ENCODE measurements at regions of chr13 and their contacts with region 1.

Region 1: DNA sequence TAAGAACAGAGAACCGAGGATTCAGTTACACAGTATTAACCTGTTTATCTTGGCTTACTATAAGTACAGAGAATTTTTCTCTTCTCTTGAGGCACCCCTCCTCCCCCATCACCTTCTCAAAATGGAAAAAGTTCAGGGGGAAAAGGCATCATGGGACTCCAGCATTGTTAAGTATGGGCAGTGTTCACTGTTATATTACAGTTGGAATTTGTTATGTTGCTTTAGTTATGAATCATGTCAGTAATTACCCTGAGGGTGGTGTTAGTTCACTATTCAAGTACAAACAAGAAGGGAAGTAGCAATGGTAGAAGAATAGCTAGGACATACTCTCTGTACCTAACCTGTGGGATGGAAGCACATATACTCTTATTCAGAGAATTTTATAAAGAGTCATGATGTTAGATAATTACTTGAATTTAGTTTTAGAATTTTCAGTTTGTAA is 12.0 kb downstream of the LPAR6 start:
- DNase-seq: no peak
- H3K4me3 Mint-ChIP-seq: peak overlapping the region; percentile 24
- H3K27ac Mint-ChIP-seq: peak overlapping the region; percentile 37
- H3K4me1 Mint-ChIP-seq: peaks cover 61% of the 10 kb centered on the region
- H3K27me3 Mint-ChIP-seq: no peaks in the 10 kb centered on the region

Region 2: GRCh38 chr13:48222358-48223301 is 178.2 kb before region 1 on chr13:
- intact Hi-C with region 1: loop called (anchors 5 kb)
- DNase-seq: no peak
- H3K4me3 Mint-ChIP-seq: no peak overlapping the region
- H3K27ac Mint-ChIP-seq: no peak overlapping the region
- H3K4me1 Mint-ChIP-seq: peaks cover 37% of the 10 kb centered on the region
- H3K27me3 Mint-ChIP-seq: peaks cover 32% of the 10 kb centered on the region

Region 3: DNA sequence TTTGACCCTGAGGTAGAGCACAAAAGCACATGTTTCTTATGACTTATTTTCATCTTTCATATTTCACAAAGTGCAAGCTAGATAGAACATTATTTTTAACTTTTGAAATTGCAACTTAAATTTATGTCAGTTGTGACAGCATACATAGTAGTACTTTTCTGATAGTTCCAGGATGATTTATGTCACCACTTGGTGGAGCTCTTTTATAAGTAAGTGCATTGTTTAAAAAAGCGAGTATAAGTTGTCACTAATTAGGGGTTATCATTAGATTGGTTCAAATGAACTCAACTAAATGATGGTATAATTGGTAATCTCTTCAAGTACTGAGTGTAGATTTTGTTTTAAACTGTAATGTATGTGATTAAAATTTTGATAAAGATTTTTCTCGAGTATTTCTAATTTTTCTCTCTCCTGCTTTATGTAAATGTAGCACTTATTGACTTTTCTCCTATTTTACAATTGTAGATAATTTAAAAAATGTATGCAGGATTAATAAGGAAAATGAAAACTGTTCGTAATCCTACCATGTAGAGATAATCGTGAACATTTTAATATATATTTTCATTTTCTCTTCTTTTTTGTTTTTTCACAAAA is 66.2 kb before region 1 on chr13:
- intact Hi-C with region 1: loop called (anchors 5 kb)
- DNase-seq: no peak
- H3K4me3 Mint-ChIP-seq: no peak overlapping the region
- H3K27ac Mint-ChIP-seq: no peak overlapping the region
- H3K4me1 Mint-ChIP-seq: peaks cover 13% of the 10 kb centered on the region
- H3K27me3 Mint-ChIP-seq: no peaks in the 10 kb centered on the region

Region 4: DNA sequence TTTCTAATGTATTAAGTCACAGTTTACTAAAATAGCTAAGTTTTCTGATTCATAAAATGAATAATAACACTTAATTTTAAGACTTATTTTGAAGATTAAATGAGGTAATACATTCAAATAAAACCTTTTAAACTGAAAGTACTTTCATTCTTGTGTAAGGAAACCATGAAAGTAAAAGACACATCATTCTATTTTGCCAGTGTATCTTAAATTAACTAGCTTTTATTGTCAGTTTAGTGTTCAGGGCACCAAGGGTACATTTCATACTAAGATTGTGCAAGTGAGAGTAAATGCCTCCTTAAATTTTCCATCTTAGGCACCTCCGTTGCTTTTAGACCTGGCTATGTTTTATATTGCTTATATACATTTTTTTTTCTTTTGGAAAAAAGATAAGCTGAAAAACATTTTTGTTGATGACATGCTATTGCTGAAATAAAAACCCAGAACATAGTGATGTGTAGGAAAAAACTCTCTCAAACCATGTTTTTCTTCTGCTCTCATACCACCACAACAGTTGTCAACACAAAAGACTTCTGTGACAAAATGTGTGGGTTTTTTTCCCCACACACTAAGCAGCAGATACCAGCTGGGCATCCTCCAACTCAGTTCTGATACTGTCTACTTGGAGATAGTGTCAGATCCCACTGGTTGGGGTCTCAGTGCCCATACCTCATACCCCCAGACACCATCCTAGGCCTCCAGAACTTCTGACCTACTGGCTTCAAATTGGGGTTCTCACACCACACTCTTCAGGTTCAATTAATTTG is 42.8 kb after region 1 on chr13:
- intact Hi-C with region 1: loop called (anchors 1 kb)
- DNase-seq: no peak
- H3K4me3 Mint-ChIP-seq: peak overlapping the region; percentile 19
- H3K27ac Mint-ChIP-seq: peak overlapping the region; percentile 64
- H3K4me1 Mint-ChIP-seq: peaks cover 18% of the 10 kb centered on the region
- H3K27me3 Mint-ChIP-seq: no peaks in the 10 kb centered on the region

Region 5: GRCh38 chr13:48532506-48533499 is 131.9 kb after region 1 on chr13 and contains the start of gene RCBTB2:
- intact Hi-C with region 1: loop called (anchors 2 kb)
- DNase-seq: peak; percentile 99
- H3K4me3 Mint-ChIP-seq: peak within 1 kb of the TSS; percentile 91
- H3K27ac Mint-ChIP-seq: peak within 1 kb of the TSS; percentile 98
- H3K4me1 Mint-ChIP-seq: peaks cover 32% of the 10 kb centered on the region
- H3K27me3 Mint-ChIP-seq: peaks cover 7% of the 10 kb centered on the region
- total RNA-seq, gene RCBTB2: 1.7 and 2.0 TPM in 2 replicates

Region 6: DNA sequence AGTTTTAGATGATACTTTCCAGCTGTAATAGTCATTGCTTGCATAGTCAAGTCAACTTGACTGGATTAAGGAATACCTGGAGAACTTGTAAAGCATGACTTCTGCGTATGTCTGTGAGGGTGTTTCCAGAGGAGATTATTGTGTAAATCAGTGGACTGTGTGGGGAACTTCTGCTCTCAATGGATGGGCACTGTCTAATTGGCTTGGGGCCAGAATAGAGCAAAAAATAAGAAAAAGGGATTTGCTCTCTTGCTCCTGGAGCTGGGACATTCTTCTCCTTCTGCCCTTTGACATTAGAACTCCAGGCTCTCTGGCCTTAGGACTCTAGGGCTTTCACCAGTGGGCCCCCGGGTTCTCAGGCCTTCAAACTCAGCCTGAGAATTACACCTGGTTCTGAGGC is 285.9 kb after region 1 on chr13:
- intact Hi-C with region 1: no loop called
- DNase-seq: no peak
- H3K4me3 Mint-ChIP-seq: no peak overlapping the region
- H3K27ac Mint-ChIP-seq: no peak overlapping the region
- H3K4me1 Mint-ChIP-seq: no peaks in the 10 kb centered on the region
- H3K27me3 Mint-ChIP-seq: no peaks in the 10 kb centered on the region

Region 7: DNA sequence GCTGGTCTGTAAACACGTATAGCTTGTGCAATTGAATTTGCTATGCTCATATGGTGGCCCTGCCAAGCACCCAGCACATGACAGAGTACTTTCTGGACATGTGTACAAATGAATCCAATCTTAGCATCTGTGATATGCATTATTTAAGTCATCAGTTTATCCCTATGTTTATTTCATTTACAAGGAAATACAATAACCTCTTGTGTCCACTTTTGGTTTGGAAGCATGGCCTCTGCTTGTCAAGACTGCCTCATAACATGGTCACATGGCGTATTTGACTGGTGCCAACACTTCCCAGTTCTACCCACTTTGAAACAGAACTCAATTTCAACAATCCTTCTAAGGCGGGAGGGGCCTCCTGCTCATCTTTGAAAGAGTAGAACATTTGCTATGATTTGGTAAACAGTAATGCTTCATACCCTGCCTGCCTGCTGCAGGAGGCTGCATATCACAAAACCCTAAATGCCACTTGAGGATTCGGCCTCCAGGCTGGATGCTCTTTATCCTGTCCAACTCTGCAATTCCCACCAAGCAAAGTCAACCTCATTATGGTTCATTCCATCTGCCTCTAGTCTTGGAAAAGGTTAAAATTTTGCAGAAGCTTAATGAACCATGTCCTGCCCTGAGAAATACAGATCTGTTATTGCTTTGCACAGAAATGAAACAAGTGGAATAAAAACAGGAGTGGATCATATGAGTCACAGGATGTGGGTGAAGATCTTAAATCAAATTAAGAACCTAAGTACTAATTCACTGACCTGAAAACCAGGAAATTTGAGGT is 404.1 kb after region 1 on chr13:
- intact Hi-C with region 1: loop called (anchors 2 kb)
- DNase-seq: no peak
- H3K4me3 Mint-ChIP-seq: peak overlapping the region; percentile 32
- H3K27ac Mint-ChIP-seq: peak overlapping the region; percentile 46
- H3K4me1 Mint-ChIP-seq: peaks cover 31% of the 10 kb centered on the region
- H3K27me3 Mint-ChIP-seq: peaks cover 10% of the 10 kb centered on the region

Region 8: DNA sequence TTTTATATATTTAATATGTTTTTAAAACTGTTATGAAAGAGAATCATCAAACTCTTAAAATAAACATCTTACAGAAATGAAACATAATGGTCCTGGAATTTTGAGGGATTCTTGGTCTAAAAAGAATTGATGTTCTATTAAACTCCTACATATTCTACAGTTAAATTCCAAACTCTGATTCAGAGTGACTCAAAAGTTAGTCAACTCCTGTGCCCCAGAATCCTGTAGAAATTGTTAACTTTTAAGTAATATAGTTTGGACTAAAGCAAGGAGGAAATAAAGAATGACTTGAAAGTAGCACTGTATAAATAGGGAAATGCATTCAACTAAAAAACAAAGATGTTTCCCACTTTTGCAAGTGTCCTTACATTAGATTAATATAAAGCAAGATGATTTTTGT is 622.6 kb after region 1 on chr13:
- intact Hi-C with region 1: no loop called
- DNase-seq: no peak
- H3K4me3 Mint-ChIP-seq: no peak overlapping the region
- H3K27ac Mint-ChIP-seq: no peak overlapping the region
- H3K4me1 Mint-ChIP-seq: peaks cover 15% of the 10 kb centered on the region
- H3K27me3 Mint-ChIP-seq: no peaks in the 10 kb centered on the region

Measured in activated T-helper 1 cell treated with anti-CD3 and anti-CD28 coated beads, Interleukin-12 subunit alpha, Interleukin-12 subunit beta, Interleukin-2, Interleukin-4 antibody, amounts not matched to agents 30 ng/mL and 10 ng/mL and 1 ng/mL, durations not matched to agents 14 hours and 24 hours and 36 hours (primary cell).